Heart right ventricle (tissue), 16 donors: ENCODE measurements at regions of chr1 and their contacts with region 1.

Region 1: DNA sequence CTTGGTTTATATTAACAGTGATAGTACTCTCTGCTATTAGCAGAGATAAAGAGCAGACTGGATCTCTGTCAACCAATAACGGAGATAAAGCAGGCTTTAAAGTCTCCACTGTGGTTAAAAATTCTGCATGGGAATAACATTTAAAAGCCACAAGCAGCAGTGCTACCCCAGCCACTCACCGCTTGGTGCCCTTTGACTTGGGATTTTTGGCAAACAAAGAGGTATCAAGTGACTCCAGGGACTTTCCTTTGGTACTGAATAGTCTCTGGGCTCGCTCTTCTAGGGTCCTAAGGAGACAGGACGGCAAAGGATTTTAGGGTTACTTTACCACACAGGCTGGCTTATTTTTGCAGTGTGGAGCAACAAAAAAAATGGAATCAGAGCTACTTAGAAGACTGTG is 11.3 kb downstream of the SF3A3 start:
- DNase-seq: no peak
- ATAC-seq: no peak
- H3K4me3 ChIP-seq: no peak overlapping the region
- H3K27ac ChIP-seq: no peak overlapping the region
- H3K4me1 ChIP-seq: no peaks in the 10 kb centered on the region
- H3K27me3 ChIP-seq: no peaks in the 10 kb centered on the region
- CTCF ChIP-seq: no peak

Region 2: GRCh38 chr1:37776946-37777516 is 201.5 kb before region 1 on chr1:
- intact Hi-C with region 1: no loop called
- DNase-seq: no peak
- ATAC-seq: no peak
- H3K4me3 ChIP-seq: no peak overlapping the region
- H3K27ac ChIP-seq: no peak overlapping the region
- H3K4me1 ChIP-seq: no peaks in the 10 kb centered on the region
- H3K27me3 ChIP-seq: peaks cover 0 to 13% (median 4%) of the 10 kb centered on the region in 7 donors
- CTCF ChIP-seq: no peak

Region 3: GRCh38 chr1:37890378-37891014 is 88.0 kb before region 1 on chr1:
- intact Hi-C with region 1: loop called in 8 of 10 experiments (anchors 2 to 10 kb)
- DNase-seq: no peak
- ATAC-seq: peak in 2 of 8 donors; percentile 51 to 56
- H3K4me3 ChIP-seq: no peak overlapping the region
- H3K27ac ChIP-seq: no peak overlapping the region
- H3K4me1 ChIP-seq: peaks cover 0 to 7% (median 0%) of the 10 kb centered on the region in 9 donors
- H3K27me3 ChIP-seq: no peaks in the 10 kb centered on the region
- CTCF ChIP-seq: peak; percentile 22 to 71 (median 58)

Region 4: DNA sequence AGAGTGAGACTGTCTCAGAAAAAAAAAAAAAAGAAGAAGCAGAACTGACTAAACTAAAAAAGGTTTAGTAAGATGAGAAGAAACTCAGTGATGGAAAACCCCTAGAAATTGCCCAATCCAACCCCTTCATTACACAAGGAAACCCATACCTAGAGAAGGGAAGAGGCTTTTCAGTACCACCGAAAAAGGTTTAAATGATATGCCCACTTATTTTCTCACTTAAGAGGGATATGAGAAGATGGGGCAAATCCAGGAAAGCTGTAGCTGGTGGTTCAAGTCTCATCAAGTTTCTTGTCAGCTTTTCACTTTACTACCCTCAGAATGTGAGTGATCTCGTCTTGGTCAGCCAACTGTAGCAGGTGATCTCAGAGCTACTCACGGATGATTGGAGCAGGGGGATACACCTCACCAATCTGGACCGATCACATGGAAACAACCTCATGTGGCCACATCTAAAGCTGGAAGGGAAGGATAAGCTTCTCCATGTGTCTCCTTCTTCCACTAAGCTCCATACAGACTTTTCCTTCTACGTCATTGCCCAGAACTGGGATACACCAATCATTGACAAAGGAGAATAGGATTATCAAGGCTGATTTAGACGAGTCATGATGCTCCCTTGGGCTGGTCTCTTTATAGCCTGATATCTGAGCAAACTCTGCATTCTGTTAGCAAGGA is 194.8 kb after region 1 on chr1:
- intact Hi-C with region 1: no loop called
- DNase-seq: no peak
- ATAC-seq: no peak
- H3K4me3 ChIP-seq: no peak overlapping the region
- H3K27ac ChIP-seq: no peak overlapping the region
- H3K4me1 ChIP-seq: no peaks in the 10 kb centered on the region
- H3K27me3 ChIP-seq: peaks cover 0 to 11% (median 0%) of the 10 kb centered on the region in 7 donors
- CTCF ChIP-seq: no peak